HAP-1 (cell line): ENCODE measurements at regions of chrX and their contacts with region 1.

Region 1: GRCh38 chrX:151680805-151681204 is 14.5 kb upstream of the PRRG3 start:
- DNase-seq: peak; percentile 17 to 87
- H3K4me3 ChIP-seq: no peak overlapping the region
- H3K4me1 ChIP-seq: no peaks in the 10 kb centered on the region
- H3K27me3 ChIP-seq: no peaks in the 10 kb centered on the region

Region 2: DNA sequence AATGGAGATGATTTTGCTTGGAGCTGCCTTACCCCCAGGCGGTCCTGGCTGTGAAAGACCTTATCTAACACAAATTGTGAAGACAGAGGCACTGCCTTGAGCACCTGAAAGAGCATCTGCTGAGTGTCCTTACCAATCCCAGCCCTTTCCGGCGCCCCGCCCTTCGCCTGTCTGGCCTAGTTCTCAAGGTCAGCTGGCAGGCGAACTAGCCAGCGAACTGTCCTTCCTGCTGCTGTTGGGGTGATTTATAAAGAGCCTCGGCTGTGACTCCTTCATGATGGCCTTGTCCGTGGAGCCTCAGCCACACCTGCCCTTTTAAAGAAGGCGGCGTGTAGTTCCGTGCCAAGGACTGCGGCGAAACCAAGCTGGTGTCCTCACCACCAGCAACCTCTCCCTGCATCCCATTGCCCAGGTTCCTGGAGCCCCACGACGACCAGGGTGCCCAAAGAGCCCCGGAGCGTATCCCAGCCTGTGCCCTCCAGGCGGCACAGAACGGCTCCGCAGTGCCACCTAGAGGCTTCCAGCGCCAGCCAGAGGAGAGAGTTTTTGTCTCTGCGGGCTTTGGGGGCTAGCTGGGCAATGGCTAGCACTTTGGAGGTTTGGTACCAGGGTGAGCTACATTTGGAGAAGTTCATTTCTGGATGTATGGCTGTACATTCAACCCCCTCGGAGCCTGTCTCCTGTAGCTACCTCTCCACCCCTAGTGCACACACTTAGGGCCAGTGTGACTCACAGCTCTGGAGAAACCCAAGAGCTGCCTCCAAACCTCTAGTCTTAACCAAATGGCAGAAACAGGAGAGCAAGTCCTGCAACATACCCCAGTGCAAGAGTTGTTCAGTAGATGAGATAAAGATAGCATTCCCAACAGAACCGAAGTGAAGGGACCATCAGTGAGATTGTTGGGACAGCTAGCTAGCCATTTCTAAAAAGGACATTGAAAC is 320.6 kb before region 1 on chrX:
- in situ Hi-C with region 1: loop called (anchors 25 kb)
- DNase-seq: peak in 1 of 2 experiments; percentile 75
- H3K4me3 ChIP-seq: no peak overlapping the region
- H3K4me1 ChIP-seq: no peaks in the 10 kb centered on the region
- H3K27me3 ChIP-seq: peaks cover 7% of the 10 kb centered on the region; the same call in 1 of the 2 replicates

Region 3: GRCh38 chrX:151852294-151852693 is 171.5 kb after region 1 on chrX:
- in situ Hi-C with region 1: no loop called
- DNase-seq: no peak
- H3K4me3 ChIP-seq: no peak overlapping the region
- H3K4me1 ChIP-seq: no peaks in the 10 kb centered on the region
- H3K27me3 ChIP-seq: no peaks in the 10 kb centered on the region

Region 4: DNA sequence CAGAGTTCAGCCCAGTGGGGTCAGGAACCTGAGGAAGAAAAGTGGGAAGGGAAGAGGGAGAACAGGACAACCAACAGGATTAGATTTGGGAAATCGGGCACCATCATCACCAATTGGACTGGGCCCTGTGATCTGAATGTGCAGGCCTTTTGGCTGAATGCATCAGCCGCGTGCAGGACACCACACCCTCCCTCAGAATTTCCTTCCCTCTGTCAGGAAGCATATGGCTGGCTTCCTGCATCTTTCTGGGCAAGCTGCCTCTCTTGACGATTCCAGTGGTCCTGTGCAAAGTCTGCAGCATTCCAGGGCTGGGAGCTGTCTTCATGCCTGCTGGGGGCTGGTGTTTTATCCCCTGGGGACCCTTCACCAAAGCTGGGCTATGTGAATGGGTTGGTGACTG is 248.3 kb after region 1 on chrX:
- in situ Hi-C with region 1: no loop called
- DNase-seq: no peak
- H3K4me3 ChIP-seq: no peak overlapping the region
- H3K4me1 ChIP-seq: no peaks in the 10 kb centered on the region
- H3K27me3 ChIP-seq: no peaks in the 10 kb centered on the region